Right ventricle myocardium inferior (tissue), 1 donor: ENCODE measurements at regions of chr15 and their contacts with region 1.

Region 1: DNA sequence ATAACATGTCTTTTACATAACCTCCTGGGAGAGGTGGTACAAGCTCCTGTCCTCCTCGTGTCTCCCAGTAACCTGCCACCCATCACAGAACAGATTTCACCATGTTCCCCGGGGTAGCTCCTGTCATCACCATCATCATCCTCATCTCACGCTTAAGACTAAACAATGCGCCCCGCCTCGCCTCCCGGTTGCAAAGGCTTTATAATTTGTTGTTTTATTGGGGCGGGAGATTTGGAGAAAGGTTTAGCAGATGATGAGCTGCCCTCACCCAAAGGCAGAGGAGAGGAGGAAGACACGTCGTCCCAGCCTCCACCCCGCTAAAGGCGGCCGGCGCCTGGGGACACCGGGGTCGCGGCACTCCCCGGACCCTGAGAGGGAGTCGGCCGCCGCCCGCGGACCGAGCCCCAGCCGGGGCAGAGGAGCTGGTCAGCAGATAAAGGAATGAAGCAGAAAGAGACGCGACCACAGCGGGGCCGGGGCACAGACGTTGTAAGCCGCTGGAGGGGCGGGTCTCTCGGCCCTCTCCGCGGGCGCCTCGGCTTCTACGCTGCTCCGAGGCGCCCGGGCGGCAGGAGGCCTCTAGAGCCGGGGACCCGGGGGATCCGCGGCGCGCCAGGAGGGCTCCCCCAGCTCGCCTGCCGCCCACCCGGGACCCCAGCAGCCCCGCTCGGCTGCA is 589 bp downstream of the HERC1 start:
- DNase-seq: peak; percentile 76
- ATAC-seq: peak; percentile 71

Region 2: DNA sequence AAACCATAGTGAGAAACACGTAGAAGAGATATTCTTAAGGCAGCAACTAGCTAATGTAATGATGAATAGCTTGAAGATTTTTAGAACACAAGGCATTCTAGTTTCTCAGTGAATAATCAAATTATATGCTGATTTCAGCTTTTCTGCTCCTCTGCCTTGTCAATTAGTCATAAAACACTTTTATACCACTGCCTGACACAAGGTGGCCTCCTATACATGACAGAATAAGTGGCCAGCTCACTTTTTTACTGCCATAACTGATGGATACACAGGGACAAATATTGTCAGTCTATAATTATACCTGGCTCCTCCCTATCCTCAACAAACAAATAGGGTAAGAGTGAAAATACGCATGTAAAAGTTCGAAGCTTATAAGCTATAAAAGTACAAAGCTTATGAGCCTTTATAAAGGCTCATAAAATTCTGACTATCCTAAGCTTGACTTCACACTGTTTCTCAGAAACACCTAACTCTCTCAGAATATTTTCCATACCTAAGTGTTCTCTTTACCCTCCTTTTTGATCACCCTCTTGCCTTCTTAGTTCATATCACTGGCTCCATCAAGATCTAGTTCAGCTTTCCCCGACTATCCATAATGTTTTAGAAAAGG is 81.0 kb before region 1 on chr15:
- intact Hi-C with region 1: no loop called
- DNase-seq: no peak
- ATAC-seq: peak; percentile 71

Region 3: DNA sequence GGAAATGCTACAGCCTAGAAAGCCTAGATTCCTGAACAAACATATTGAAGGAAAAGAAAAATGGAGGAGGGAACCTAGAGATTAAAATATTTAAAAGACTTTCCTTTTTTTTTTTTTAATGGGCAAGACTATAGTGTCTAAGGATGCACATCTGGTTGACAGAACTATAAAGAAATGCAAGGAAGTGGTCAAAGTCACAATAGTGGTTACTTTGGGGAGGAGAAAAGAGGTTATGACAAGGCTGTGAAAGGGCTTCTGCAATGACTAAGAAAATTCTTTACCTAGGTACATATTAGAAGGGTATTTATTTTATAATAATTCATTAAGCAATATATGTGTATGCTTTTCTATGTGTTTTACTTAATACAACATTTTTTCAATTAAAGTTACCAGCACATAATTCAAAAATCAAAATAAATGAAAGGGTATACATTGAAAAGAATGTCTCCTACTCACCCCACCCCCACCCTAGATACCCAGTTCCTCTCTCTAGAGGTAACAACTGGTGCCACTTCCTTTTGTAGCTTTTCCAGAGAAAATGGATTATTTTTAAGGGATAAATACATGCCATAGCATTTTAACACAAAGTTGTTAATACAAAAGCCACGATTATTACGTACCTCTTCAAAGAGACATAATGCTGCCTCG is 69.6 kb before region 1 on chr15:
- intact Hi-C with region 1: loop called (anchors 5 kb)
- DNase-seq: no peak
- ATAC-seq: no peak

Region 4: GRCh38 chr15:63791228-63791627 is 41.9 kb before region 1 on chr15:
- intact Hi-C with region 1: loop called (anchors 5 kb)
- DNase-seq: no peak
- ATAC-seq: no peak

Region 5: DNA sequence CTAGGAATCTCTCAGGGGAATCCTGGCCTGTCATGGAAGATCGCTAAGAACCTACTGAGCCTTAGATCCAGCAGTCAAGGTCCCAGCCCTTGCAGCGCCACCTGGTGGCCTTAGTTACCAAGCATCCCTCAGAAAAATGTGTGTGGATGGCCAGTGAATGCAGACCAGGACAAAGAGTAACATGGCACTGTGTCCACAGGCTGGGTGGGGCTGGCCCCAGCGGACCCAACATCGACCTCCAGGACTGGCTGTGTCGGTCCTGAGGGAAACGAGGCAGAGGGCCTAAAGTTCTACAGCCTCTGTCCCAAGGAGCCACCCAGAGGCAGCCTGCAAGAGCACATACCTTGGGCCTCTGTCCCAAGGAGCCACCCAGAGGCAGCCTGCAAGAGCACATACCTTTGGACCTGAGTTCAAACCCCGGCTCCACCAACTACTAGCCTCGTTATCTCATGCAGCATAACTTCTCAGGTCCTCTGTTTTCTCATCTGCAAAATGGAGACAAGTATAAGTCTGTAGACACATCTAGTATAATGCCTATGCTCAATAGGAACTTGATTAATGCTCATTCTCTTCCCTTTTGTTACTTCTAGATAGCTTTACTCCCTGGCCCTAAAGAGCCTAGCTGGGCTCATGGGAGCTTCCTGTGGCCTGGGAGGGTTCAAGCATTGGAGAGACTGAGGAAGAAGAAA is 58.1 kb after region 1 on chr15:
- intact Hi-C with region 1: loop called (anchors 5 kb)
- DNase-seq: peak; percentile 90
- ATAC-seq: peak; percentile 62

Region 6: DNA sequence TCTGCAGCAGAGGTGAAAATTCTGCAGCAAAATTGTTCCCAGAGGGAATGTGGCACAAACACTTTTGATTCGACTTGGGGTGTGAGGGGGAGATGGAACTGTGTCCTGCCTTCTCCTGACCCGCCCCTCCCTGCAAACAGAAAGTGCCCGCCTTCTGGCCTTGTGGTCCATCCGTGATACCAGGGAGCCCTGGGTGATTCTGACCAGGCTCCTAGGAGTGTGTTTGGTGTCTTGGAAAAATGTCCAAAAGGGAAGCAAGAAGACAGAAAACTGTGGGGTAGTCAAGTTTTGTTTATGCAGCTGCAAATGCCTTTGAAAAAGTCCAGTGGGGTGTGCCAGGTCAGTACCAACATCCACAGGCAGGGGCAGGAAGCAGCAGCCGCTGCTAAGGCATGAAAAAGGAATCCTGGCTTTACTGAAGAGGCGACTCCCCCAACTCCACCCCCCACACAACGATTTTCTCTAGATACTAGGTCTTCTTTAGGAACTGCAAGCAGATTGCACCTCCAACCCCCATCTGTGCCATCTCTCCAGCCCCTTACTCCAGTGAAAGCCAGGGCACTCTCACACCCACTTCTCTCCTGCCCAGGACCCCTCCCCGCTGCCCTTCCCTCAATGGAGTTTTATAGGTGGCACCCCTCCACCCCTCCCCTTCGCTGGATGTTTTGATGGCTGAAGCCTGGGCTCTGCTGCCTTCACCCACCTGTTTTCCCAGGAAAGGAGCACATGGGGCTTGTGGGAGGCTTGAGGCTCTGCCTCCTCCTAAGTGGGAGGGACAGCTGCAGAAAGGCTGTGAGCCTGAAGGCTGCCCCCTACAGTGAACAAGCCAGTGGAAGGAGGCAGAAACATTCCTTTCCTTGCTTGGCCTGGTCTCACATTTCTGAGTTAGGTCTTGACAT is 83.0 kb after region 1 on chr15:
- intact Hi-C with region 1: no loop called
- DNase-seq: no peak
- ATAC-seq: no peak

Region 7: DNA sequence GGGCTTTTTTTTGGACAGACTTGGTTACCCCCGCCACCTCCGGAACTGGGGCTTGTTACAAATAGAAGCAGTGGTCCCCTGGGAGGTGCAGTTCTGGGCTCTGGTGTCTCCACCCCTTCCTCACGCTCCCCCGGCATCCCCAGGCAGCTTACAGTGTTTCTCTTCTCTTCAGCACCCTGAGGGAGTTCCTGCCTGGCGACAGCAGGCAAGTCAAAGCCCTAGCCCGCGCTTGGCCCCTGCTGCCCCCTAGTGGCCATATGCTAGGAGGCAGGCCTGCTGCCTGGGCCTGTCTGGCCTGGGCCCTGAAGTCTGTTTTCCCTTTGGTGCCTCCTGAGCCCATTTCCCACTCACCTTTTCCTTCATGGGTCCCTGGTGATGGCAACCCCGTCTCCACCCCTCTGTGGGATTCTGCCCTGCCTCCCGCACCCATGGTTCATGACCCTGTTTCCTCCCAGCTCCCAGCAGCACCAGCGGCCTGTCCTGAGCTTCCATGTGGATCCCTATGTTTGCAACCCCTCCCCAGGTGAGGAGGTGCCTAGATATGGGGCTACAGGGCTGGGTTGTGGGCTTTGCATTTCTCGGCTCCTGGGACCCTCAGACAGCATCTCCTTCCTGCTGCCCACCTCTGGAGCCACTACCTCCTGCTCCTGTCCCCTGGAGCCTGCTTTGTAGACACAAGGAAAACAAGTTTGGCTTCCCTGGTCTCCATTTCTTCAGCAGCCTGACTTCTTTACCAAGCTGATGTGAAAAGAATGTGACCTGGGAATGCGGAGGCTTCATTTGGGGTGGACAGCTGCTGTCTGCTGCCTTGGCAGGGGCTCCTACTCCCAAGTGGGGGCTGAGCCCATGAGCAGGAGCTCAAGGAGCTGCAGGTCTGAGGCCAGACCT is 320.6 kb after region 1 on chr15:
- intact Hi-C with region 1: no loop called
- DNase-seq: peak; percentile 95
- ATAC-seq: peak; percentile 84